ENCODE measurements at regions of chr3 and their contacts with region 1.

Region 1: DNA sequence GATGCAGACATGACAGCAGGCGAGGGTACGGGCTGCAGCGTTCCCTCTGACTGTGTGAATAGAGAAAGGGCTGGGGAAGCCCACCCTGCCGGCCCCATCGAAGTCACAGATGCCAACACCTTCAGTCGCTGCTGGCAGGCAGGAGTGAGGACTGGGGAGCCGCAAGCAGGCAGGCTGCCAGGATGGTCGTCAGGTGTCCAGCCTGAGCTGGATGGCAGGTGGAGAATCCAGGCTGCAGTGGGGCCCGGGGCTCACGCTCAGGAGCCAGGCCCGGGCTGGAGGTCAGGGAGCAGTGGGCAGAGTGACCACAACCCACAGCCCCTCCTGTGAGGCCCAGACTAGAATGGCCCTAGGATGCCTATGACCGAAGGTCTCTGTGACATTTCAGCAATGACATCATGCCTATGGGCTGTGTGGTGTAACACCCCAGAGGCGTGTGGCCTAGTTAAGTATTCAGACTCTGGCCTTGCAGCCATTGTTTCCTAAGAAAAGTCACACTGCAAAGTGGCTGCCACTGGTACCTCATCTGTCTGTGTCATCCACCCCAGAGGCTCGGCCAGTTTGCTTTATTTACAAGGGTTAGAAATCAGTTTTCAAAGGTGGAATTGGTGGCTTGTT is 15.7 kb downstream of the PRR23E start:
- DNase-seq: no peak
- ATAC-seq: peak; percentile 69
- H3K4me3 ChIP-seq: no peak overlapping the region
- H3K27ac ChIP-seq: no peak overlapping the region
- H3K4me1 ChIP-seq: no peaks in the 10 kb centered on the region
- H3K27me3 ChIP-seq: no peaks in the 10 kb centered on the region
- CTCF ChIP-seq: no peak
- EP300 ChIP-seq: no peak
- POLR2A ChIP-seq: no peak
- RAD21 ChIP-seq: no peak

Region 2: DNA sequence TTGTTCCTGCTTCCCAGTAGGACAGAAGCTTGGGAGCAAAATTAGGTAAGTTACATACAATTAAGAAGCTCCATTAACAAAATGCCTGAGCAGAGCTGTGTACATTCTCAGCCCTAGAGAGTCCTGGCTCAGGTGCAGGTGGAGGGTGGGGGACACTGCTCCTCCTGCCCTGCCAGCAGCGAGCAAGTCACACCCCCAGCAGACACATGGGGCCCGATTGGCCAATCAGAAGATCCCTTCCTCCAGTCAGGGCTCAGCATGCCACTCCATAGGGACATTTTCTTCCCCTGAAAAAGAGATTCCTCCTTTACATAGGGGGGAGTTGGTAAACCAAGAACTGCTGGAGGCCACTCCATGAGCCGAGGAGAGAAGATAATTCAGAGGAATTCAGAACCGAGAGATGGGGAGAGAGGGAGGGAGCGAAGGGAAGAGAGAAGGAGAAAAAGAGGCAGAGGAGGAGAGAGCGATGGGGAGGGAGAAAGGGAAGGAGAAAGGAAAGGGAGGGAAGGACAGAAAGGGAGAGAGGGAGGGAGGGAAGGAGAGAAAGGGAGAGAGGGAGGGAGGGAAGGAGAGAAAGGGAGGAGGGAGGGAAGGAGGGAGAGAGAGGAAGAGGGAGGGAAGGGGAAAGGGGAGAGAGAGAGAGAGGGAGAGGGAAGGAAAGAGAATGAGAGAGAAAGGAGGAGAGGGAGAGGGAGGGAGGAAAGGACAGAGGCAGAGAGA is 163.4 kb before region 1 on chr3:
- CTCF ChIA-PET with region 1: no interaction called
- POLR2A ChIA-PET with region 1: no interaction called
- RAD21 ChIA-PET with region 1: no interaction called
- SMC1A ChIA-PET with region 1: no interaction called
- in situ Hi-C with region 1: no loop called
- intact Hi-C with region 1: no loop called
- DNase-seq: no peak
- ATAC-seq: peak; percentile 60; the same call in 2 of the 3 replicates
- H3K4me3 ChIP-seq: no peak overlapping the region
- H3K27ac ChIP-seq: no peak overlapping the region
- H3K4me1 ChIP-seq: no peaks in the 10 kb centered on the region
- H3K27me3 ChIP-seq: no peaks in the 10 kb centered on the region
- CTCF ChIP-seq: no peak
- EP300 ChIP-seq: no peak
- POLR2A ChIP-seq: no peak
- RAD21 ChIP-seq: no peak

Region 3: DNA sequence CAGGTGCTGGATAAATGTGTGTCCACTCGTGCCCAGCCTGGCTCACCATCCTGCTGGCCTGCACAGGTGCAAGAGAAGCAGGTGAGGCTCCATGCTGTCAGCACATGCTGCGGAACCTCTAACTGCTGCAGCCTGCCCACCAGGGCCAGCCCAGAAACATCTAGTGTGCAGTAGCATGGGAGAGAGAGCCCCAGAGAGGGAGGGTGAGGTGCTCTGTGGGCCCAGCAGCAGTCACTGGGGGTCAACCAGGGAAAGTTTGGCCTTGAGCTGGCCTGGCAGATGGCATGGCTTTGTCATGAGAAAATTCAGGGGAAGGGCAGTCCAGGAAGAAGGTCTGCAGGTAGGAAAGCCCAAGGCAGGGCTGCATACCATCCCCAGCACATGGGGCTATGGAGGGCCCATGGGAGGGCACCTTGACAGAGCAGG is 33.9 kb before region 1 on chr3:
- CTCF ChIA-PET with region 1: no interaction called
- POLR2A ChIA-PET with region 1: no interaction called
- RAD21 ChIA-PET with region 1: no interaction called
- SMC1A ChIA-PET with region 1: no interaction called
- in situ Hi-C with region 1: no loop called
- intact Hi-C with region 1: no loop called
- DNase-seq: no peak
- ATAC-seq: no peak
- H3K4me3 ChIP-seq: no peak overlapping the region
- H3K27ac ChIP-seq: no peak overlapping the region
- H3K4me1 ChIP-seq: no peaks in the 10 kb centered on the region
- H3K27me3 ChIP-seq: no peaks in the 10 kb centered on the region; a peak in 2 of 4 replicates
- CTCF ChIP-seq: no peak
- EP300 ChIP-seq: no peak
- POLR2A ChIP-seq: no peak
- RAD21 ChIP-seq: no peak

Region 4: DNA sequence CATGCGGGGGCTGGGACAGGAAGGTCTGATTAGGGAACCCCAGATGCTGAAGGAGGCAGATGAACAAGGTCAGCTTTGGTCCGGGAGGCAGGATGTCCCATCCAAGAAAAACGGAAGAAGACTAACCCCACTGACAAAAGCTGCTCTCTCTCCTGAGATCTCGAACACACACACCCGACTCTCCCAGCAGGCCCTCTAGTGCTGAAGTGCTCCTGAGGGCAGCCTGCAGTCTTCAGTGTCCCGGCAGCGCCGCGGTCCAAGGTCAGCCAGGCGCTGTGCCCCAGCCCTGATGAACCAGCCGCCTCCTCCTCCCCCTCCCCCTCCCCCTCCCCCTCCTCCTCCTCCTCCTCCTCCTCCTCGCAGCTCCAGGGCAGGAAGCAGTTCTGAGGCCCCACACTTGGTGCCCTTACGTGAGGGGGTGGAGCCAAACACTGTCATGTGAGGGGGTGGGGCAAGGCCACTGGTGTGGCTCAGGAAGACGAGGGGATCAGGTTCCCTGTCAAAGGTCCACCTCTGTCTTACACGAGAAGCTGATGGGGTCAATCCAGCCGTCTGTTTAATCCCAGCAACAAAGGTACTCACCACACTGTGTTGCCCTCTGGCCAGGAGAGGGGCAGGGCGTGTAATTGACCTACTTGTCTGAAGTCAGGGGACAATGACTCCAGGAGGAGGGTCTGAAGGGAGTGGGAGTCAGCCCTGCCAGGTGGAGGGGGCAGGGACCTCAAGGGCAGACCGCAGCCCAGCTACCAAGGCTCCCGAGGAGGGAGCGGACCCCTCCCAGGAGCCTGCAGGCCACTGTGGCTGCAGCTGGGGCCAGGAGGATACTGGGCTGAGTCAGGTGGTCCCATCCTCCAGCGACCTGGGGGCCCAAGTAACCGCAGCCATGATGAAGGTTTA is 18.6 kb after region 1 on chr3:
- CTCF ChIA-PET with region 1: interaction called, 5 read pairs
- POLR2A ChIA-PET with region 1: interaction called, 6 read pairs
- RAD21 ChIA-PET with region 1: interaction called, 48 read pairs
- SMC1A ChIA-PET with region 1: interaction called, 39 read pairs
- in situ Hi-C with region 1: no loop called
- intact Hi-C with region 1: no loop called
- DNase-seq: no peak
- ATAC-seq: 0 out of 3 replicates have a peak, but pooled peaks have one; percentile 25
- H3K4me3 ChIP-seq: no peak overlapping the region
- H3K27ac ChIP-seq: no peak overlapping the region
- H3K4me1 ChIP-seq: no peaks in the 10 kb centered on the region; the same call in 1 of the 2 replicates
- H3K27me3 ChIP-seq: no peaks in the 10 kb centered on the region; a peak in 1 of 4 replicates
- CTCF ChIP-seq: no peak
- EP300 ChIP-seq: no peak
- POLR2A ChIP-seq: peak; percentile 32; the same call in 1 of the 2 replicates
- RAD21 ChIP-seq: no peak

Region 5: DNA sequence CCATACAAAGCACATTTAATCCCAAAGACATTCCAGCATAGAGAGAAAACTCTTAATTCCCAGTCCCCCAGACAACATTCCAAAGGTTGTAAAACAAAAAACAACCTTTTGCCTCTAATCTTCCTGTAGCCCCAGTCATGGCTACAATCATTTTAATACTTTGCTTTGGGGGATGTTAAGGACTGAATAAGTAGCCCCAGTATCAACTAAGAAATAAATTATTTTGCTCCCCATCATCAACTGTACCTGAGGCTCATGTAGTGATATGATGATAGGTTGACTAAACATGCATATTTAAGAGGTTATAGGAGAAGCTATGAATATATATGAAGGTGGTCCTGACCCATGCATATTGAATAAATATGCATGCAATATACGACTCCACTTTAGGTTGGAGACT is 38.7 kb after region 1 on chr3:
- CTCF ChIA-PET with region 1: no interaction called
- POLR2A ChIA-PET with region 1: no interaction called
- RAD21 ChIA-PET with region 1: no interaction called
- SMC1A ChIA-PET with region 1: no interaction called
- in situ Hi-C with region 1: no loop called
- intact Hi-C with region 1: no loop called
- DNase-seq: no peak
- ATAC-seq: no peak
- H3K4me3 ChIP-seq: no peak overlapping the region
- H3K27ac ChIP-seq: no peak overlapping the region
- H3K4me1 ChIP-seq: no peaks in the 10 kb centered on the region
- H3K27me3 ChIP-seq: no peaks in the 10 kb centered on the region; a peak in 1 of 4 replicates
- CTCF ChIP-seq: no peak
- EP300 ChIP-seq: no peak
- POLR2A ChIP-seq: no peak
- RAD21 ChIP-seq: no peak

Region 6: GRCh38 chr3:127299276-127299675 is 90.7 kb after region 1 on chr3:
- CTCF ChIA-PET with region 1: no interaction called
- POLR2A ChIA-PET with region 1: no interaction called
- RAD21 ChIA-PET with region 1: no interaction called
- SMC1A ChIA-PET with region 1: no interaction called
- in situ Hi-C with region 1: no loop called
- intact Hi-C with region 1: no loop called
- DNase-seq: no peak
- ATAC-seq: no peak
- H3K4me3 ChIP-seq: no peak overlapping the region
- H3K27ac ChIP-seq: no peak overlapping the region
- H3K4me1 ChIP-seq: no peaks in the 10 kb centered on the region
- H3K27me3 ChIP-seq: no peaks in the 10 kb centered on the region
- CTCF ChIP-seq: no peak
- EP300 ChIP-seq: no peak
- POLR2A ChIP-seq: no peak
- RAD21 ChIP-seq: no peak

Measured in GM12878 (cell line).